B cell (primary cell): ENCODE measurements at regions of chr20 and their contacts with region 1.

Region 1: DNA sequence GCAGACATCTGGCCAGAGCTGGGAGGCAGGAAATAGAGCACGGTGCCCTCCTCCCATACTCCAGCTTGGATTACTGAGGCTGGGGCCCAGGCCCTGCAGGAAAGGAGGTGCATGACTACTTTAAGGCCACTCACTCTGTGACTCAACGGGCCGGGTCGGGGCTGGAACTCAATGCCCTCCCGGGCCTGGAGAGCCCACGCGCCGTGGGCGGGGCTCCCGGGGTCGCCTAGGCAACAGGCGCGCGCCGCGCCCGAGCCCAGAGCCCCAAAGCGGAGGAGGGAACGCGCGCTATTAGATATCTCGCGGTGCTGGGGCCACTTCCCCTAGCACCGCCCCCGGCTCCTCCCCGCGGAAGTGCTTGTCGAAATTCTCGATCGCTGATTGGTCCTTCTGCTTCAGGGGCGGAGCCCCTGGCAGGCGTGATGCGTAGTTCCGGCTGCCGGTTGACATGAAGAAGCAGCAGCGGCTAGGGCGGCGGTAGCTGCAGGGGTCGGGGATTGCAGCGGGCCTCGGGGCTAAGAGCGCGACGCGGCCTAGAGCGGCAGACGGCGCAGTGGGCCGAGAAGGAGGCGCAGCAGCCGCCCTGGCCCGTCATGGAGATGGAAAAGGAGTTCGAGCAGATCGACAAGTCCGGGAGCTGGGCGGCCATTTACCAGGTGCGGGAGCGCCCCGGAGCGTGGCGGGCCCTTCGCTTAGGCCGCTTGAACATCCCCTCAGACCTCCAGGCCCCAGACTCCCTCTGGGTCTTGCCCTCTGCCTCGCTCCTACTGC is at the start of gene PTPN1:
- DNase-seq: peak; percentile 100
- ATAC-seq: peak; percentile 92
- H3K4me3 ChIP-seq: peak within 1 kb of the TSS; percentile 67 to 100 (median 95)
- H3K4me3 Mint-ChIP-seq: peak within 1 kb of the TSS; percentile 98
- H3K27ac ChIP-seq: peak within 1 kb of the TSS; percentile 91 to 95
- H3K27ac Mint-ChIP-seq: peak within 1 kb of the TSS; percentile 92
- H3K4me1 ChIP-seq: peaks cover 45 to 50% of the 10 kb centered on the region in 2 donors
- H3K4me1 Mint-ChIP-seq: peaks cover 50% of the 10 kb centered on the region
- H3K27me3 ChIP-seq: no peaks in the 10 kb centered on the region
- H3K27me3 Mint-ChIP-seq: no peaks in the 10 kb centered on the region
- CTCF ChIP-seq: no peak
- total RNA-seq, gene PTPN1: 134 TPM in 2 replicates

Region 2: DNA sequence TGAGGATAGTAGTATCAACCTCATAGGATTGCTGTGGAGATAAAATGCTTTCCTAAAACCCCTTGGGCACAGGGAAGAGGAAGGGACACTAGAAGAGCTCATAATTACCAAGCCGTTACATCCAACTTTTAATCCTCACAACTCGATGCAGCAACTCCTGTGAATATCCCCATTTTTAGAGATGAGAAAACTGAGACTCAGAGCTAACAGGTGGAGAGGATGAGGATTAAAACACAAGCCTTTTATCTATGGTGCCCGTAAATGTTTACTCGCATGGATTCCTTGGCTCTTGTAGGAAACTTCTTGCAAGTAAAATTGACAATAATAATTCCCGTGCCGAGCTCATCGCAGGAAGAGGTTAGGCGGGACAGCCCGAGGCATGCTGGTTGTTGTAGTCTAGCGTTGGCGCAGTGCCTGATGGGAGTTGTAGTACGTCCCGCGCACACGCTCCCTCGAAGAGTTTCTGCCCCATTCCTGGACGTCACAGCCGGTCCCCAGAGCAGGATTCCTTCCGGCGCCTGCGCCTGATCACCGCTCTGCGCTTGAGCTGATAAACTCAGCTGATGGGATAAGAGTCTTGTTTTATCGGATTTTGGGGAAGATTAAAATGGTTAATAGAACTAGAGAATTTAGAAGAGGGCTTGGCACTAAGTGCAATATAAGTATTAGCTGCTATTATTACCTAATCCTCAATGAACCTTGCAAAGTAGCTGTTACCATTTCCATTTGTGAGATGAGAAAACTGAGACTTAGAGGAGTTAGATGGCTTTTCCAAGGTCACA is 394.3 kb before region 1 on chr20:
- CTCF ChIA-PET with region 1: no interaction called
- POLR2A ChIA-PET with region 1: no interaction called
- intact Hi-C with region 1: loop called (anchors 2 kb)
- DNase-seq: peak; percentile 87
- ATAC-seq: peak; percentile 77
- H3K4me3 ChIP-seq: peak overlapping the region; percentile 54 to 78 (median 64)
- H3K4me3 Mint-ChIP-seq: peak overlapping the region; percentile 85
- H3K27ac ChIP-seq: peak overlapping the region; percentile 38 to 53
- H3K27ac Mint-ChIP-seq: peak overlapping the region; percentile 86
- H3K4me1 ChIP-seq: peaks cover 39 to 40% of the 10 kb centered on the region in 2 donors
- H3K4me1 Mint-ChIP-seq: peaks cover 56% of the 10 kb centered on the region
- H3K27me3 ChIP-seq: no peaks in the 10 kb centered on the region
- H3K27me3 Mint-ChIP-seq: no peaks in the 10 kb centered on the region
- CTCF ChIP-seq: no peak

Region 3: GRCh38 chr20:50224531-50225255 is 285.4 kb before region 1 on chr20:
- CTCF ChIA-PET with region 1: no interaction called
- POLR2A ChIA-PET with region 1: no interaction called
- intact Hi-C with region 1: no loop called
- DNase-seq: no peak
- ATAC-seq: no peak
- H3K4me3 ChIP-seq: no peak overlapping the region
- H3K4me3 Mint-ChIP-seq: no peak overlapping the region
- H3K27ac ChIP-seq: no peak overlapping the region
- H3K27ac Mint-ChIP-seq: no peak overlapping the region
- H3K4me1 ChIP-seq: no peaks in the 10 kb centered on the region
- H3K4me1 Mint-ChIP-seq: no peaks in the 10 kb centered on the region
- H3K27me3 ChIP-seq: no peaks in the 10 kb centered on the region
- H3K27me3 Mint-ChIP-seq: peaks cover 17% of the 10 kb centered on the region
- CTCF ChIP-seq: no peak

Region 4: DNA sequence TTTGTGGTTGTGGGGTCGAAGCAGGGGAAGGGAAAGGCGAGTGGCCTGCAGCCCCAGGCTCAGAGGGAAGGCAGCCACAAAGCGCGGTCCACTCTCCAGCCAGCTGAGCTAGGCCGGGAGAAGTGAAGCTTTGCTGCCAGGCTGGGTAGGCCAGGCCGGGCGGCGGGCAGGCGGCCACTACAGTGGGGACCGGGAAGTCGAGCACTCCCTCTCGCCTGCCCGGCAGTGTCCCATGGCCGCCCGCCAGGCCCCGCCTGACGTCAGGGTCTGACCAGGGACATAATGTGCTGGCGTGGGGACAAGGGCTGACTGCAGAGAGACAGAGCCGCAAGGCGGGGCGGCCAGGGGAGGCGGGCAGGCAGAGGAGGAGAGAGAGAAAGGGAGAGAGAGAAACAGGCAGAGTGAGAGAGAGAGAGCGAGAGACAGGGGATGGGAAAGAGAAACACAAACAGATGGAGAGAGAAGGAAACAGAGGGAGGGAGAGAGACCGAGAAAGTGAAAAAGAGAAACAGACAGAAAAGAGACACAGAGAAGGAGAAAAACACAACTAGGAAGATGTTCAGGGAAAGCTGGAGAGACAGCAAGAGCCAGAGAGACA is 94.5 kb before region 1 on chr20:
- CTCF ChIA-PET with region 1: no interaction called
- POLR2A ChIA-PET with region 1: no interaction called
- intact Hi-C with region 1: no loop called
- DNase-seq: no peak
- ATAC-seq: no peak
- H3K4me3 ChIP-seq: no peak overlapping the region
- H3K4me3 Mint-ChIP-seq: no peak overlapping the region
- H3K27ac ChIP-seq: no peak overlapping the region
- H3K27ac Mint-ChIP-seq: no peak overlapping the region
- H3K4me1 ChIP-seq: no peaks in the 10 kb centered on the region
- H3K4me1 Mint-ChIP-seq: no peaks in the 10 kb centered on the region
- H3K27me3 ChIP-seq: peaks cover 0 to 3% (median 2%) of the 10 kb centered on the region in 4 experiments
- H3K27me3 Mint-ChIP-seq: peaks cover 21% of the 10 kb centered on the region
- CTCF ChIP-seq: no peak

Region 5: DNA sequence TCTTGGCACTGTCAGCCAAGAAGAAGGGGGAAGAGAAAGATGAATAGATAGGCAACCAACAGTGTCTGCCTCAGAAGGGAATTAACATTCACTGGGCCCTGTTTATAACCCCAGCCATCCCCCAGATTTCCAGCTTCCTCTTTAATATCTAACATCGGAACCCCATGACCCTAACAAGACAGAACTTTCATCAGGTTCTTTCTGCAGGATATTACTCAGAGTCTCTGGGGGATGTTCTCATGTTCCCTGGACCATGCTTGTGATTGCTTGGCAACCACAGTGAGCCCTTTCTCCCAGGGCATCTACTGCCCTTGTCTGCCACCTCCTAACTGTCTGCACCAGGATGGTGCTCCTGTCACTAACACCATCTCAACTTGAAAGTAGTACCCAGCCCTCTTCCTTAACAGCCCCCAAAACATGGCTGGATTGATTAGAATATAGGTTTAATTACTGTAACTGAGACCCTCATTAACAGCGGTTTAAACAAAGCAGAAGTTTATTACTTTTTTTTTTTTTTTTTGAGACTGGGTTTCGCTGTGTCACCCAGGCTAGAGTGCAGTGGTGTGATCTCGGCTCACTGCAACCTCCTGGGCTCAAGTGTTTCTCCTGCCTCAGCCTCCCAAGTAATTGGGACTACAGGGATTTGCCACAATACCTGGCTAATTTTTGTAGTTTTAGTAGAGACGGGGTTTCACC is 11.9 kb before region 1 on chr20:
- CTCF ChIA-PET with region 1: interaction called, 11 read pairs
- POLR2A ChIA-PET with region 1: interaction called, 4 read pairs
- intact Hi-C with region 1: loop called (anchors 1 kb)
- DNase-seq: peak; percentile 73
- ATAC-seq: peak; percentile 77
- H3K4me3 ChIP-seq: no peak overlapping the region
- H3K4me3 Mint-ChIP-seq: peak overlapping the region; percentile 38
- H3K27ac ChIP-seq: peak overlapping the region; percentile 27 to 60
- H3K27ac Mint-ChIP-seq: peak overlapping the region; percentile 90
- H3K4me1 ChIP-seq: peaks cover 0 to 21% of the 10 kb centered on the region in 2 donors
- H3K4me1 Mint-ChIP-seq: peaks cover 41% of the 10 kb centered on the region
- H3K27me3 ChIP-seq: no peaks in the 10 kb centered on the region
- H3K27me3 Mint-ChIP-seq: no peaks in the 10 kb centered on the region
- CTCF ChIP-seq: no peak

Region 6: DNA sequence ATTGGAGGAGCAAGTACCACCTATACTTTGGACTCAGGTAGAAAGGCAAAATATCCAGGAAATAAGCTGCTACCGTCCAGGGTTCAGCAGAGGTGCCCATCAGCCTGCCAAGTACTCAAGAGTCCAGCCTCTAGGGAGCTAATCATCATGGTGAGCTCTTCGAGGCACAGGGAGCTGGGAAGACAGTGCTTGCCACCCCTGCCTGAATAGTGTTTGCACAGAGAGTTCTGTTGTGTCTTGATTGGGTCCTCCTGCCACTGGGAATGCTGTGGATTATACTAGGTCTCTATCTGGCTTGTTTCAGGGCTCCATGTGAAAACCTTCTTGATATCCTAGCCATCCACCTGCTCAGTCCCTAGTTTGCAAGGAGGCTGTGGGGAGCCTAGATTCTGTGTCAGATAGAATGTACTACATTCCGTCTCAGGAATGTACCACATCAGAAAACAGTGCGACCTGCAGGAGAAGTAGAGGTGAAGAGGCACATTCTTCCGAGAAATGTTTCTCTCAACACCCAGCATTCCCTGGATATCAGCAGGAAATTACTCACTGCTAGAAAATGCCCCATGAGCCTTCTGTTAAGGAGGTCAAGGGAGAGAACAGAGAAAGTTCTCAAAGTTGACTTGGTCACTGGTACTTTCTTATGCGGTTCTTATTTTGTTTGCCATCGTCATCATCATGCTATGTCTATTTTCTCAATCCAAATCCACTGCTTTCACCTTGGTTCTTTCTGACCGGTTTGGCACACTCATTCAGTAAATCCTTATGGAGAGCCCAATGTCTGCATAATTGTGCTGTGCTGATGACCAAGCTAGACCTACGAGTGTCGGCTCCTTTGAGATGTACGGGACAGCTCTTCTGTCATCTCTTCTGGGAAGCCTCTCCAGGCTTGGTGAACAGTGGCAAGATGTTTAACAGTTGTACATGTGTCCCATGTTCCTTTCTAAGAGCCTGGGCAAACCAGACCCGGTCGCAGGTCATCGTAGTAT is 30.8 kb after region 1 on chr20:
- CTCF ChIA-PET with region 1: interaction called, 79 read pairs
- POLR2A ChIA-PET with region 1: interaction called, 19 read pairs
- intact Hi-C with region 1: no loop called
- DNase-seq: no peak
- ATAC-seq: no peak
- H3K4me3 ChIP-seq: peak overlapping the region in 4 of 5 experiments; percentile 3 to 23 (median 11)
- H3K4me3 Mint-ChIP-seq: peak overlapping the region; percentile 87
- H3K27ac ChIP-seq: peak overlapping the region; percentile 74 to 76
- H3K27ac Mint-ChIP-seq: peak overlapping the region; percentile 97
- H3K4me1 ChIP-seq: peaks cover 73 to 89% of the 10 kb centered on the region in 2 donors
- H3K4me1 Mint-ChIP-seq: peaks cover 76% of the 10 kb centered on the region
- H3K27me3 ChIP-seq: no peaks in the 10 kb centered on the region
- H3K27me3 Mint-ChIP-seq: no peaks in the 10 kb centered on the region
- CTCF ChIP-seq: no peak

Region 7: GRCh38 chr20:50569864-50570836 is 60.0 kb after region 1 on chr20:
- CTCF ChIA-PET with region 1: interaction called, 292 read pairs
- POLR2A ChIA-PET with region 1: interaction called, 3 read pairs
- intact Hi-C with region 1: loop called (anchors 1 kb)
- DNase-seq: peak; percentile 71
- ATAC-seq: peak; percentile 87
- H3K4me3 ChIP-seq: no peak overlapping the region
- H3K4me3 Mint-ChIP-seq: peak overlapping the region; percentile 36
- H3K27ac ChIP-seq: peak overlapping the region; percentile 24 to 83
- H3K27ac Mint-ChIP-seq: peak overlapping the region; percentile 89
- H3K4me1 ChIP-seq: peaks cover 26 to 38% of the 10 kb centered on the region in 2 donors
- H3K4me1 Mint-ChIP-seq: peaks cover 71% of the 10 kb centered on the region
- H3K27me3 ChIP-seq: no peaks in the 10 kb centered on the region
- H3K27me3 Mint-ChIP-seq: no peaks in the 10 kb centered on the region
- CTCF ChIP-seq: peak; percentile 54

Region 8: GRCh38 chr20:50582591-50583234 is 72.6 kb after region 1 on chr20:
- CTCF ChIA-PET with region 1: interaction called, 292 read pairs
- POLR2A ChIA-PET with region 1: interaction called, 3 read pairs
- intact Hi-C with region 1: loop called (anchors 2 kb)
- DNase-seq: peak; percentile 76
- ATAC-seq: peak; percentile 93
- H3K4me3 ChIP-seq: peak overlapping the region in 3 of 5 experiments; percentile 7 to 19 (median 8)
- H3K4me3 Mint-ChIP-seq: peak overlapping the region; percentile 44
- H3K27ac ChIP-seq: peak overlapping the region; percentile 66 to 86
- H3K27ac Mint-ChIP-seq: peak overlapping the region; percentile 88
- H3K4me1 ChIP-seq: peaks cover 20 to 35% of the 10 kb centered on the region in 2 donors
- H3K4me1 Mint-ChIP-seq: peaks cover 41% of the 10 kb centered on the region
- H3K27me3 ChIP-seq: no peaks in the 10 kb centered on the region
- H3K27me3 Mint-ChIP-seq: no peaks in the 10 kb centered on the region
- CTCF ChIP-seq: no peak